ENCODE measurements at regions of chr1 and their contacts with region 1.

Region 1: DNA sequence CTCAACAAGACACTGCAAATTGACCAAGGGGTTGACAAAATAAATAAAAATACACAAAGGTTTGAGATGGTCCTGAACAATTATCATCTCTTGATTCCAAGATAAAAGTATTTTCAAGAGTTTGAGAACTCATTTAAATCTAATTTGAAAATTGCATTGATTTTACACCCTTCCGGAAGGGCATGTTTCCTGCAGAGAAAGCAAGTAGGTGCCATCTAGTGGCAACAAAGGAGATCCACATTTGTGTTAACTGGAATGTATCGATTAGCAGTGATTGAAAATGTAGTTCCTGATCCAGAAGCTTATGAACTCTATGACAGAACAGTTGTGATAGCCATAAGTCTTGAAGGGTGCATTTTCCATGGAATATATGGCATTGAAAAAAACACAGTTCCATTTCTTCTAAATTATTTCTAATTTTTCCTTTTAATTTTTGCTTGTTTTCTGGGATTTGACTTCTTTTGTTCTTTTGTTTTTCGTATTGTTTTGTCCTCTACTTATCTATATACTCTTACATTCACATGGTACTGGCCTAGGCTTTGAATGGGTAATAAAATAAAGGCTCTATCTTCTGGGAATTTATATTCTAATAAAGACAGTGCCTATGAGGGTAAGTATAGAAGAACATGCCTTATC is 143.7 kb downstream of the DNM3 start:
- DNase-seq: peak; percentile 38
- CTCF ChIP-seq: peak; percentile 73

Region 2: DNA sequence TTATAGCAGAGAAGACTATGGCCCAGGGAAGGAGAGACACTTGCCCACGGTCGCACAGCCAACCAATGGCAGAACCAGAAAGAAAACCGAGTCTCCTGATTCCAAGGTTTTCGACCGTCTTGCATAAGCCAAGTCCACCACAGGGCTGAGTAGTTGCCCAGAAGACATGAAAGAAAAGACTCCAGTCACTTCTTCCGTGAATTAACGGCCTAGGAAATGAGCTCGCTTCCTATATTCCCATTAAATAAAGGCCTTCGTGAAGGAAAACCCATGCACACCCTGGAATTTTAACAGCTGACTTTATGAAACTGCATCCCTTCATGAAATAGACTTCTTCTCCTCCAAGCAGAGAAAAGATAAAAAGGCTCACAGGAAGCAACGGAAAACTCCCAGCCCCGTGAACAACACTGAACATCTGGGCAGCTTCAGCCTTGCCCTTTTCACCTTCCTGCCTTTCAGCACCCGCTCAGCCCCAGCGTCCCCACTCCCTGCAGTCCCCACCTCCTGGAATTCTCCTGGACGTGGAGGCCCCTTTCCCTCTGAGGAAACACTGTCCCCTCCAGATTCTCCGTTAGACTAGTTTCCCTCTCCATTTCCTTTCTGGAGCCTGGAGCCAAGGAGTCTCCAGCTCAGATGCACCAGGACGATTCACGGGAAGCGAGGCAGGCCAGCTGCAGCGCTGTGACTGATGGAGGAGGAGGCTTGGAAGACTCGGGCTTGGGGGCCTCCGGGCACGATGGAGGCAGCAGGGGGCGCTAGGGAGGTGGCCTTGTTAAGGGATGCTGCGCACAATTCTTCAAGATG is 329.8 kb before region 1 on chr1:
- in situ Hi-C with region 1: loop called (anchors 25 kb)
- DNase-seq: peak; percentile 77
- CTCF ChIP-seq: peak; percentile 71

Region 3: GRCh38 chr1:171801487-171801891 is 183.5 kb before region 1 on chr1:
- in situ Hi-C with region 1: loop called (anchors 10 kb)
- DNase-seq: peak; percentile 50
- CTCF ChIP-seq: peak; percentile 62